GM12878 (cell line): ENCODE measurements at regions of chr15 and their contacts with region 1.

Region 1: GRCh38 chr15:44738340-44738984 is 2.1 kb downstream of the TRIM69 start:
- DNase-seq: no peak
- ATAC-seq: no peak
- H3K4me3 ChIP-seq: no peak overlapping the region
- H3K27ac ChIP-seq: no peak overlapping the region
- H3K4me1 ChIP-seq: peaks cover 22% of the 10 kb centered on the region
- H3K27me3 ChIP-seq: no peaks in the 10 kb centered on the region
- CTCF ChIP-seq: peak; percentile 55 to 80 (median 70); a peak in 5 of 6 replicates
- EP300 ChIP-seq: no peak
- POLR2A ChIP-seq: no peak
- RAD21 ChIP-seq: peak; percentile 87

Region 2: DNA sequence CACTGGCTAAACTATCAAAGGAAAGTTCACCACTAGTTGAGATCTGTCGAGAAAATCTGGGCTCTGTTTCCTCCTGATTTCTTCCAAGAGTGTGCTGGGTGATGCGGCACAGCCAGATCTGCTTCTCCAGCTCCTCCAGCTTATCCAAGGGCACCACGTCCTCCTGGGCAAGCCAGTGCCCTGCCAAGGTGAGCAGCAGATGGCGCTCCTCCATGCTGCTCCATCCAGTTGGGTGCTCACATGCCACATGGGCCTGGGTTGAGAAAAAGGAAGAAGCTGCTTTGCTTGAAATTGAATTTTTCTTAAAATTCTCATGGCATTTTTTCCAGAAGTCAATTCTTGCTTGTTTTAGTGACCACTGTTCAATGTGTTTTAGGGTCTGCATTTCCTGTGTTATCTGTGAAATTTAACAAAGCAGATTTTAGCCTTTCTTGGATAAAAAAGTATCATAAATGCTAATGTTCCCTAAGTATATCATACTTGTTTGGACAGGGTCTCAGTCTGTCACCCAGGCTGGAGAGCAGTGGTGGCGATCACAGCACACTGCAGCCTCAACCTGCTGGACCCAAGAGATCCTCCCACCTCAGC is 154.2 kb before region 1 on chr15:
- CTCF ChIA-PET with region 1: interaction called, 175 read pairs
- POLR2A ChIA-PET with region 1: interaction called, 18 read pairs
- RAD21 ChIA-PET with region 1: interaction called, 109 read pairs
- SMC1A ChIA-PET with region 1: interaction called, 148 read pairs
- in situ Hi-C with region 1: no loop called
- intact Hi-C with region 1: no loop called
- DNase-seq: no peak
- ATAC-seq: peak; percentile 99; the same call in 2 of the 3 replicates
- H3K4me3 ChIP-seq: no peak overlapping the region
- H3K27ac ChIP-seq: no peak overlapping the region
- H3K4me1 ChIP-seq: no peaks in the 10 kb centered on the region
- H3K27me3 ChIP-seq: no peaks in the 10 kb centered on the region
- CTCF ChIP-seq: peak; percentile 63 to 77 (median 75)
- EP300 ChIP-seq: no peak
- POLR2A ChIP-seq: no peak
- RAD21 ChIP-seq: peak; percentile 49

Region 3: GRCh38 chr15:44606740-44607139 is 131.7 kb before region 1 on chr15:
- CTCF ChIA-PET with region 1: interaction called, 22 read pairs
- POLR2A ChIA-PET with region 1: no interaction called
- RAD21 ChIA-PET with region 1: interaction called, 7 read pairs
- SMC1A ChIA-PET with region 1: interaction called, 16 read pairs
- in situ Hi-C with region 1: no loop called
- intact Hi-C with region 1: no loop called
- DNase-seq: no peak
- ATAC-seq: no peak
- H3K4me3 ChIP-seq: no peak overlapping the region
- H3K27ac ChIP-seq: no peak overlapping the region
- H3K4me1 ChIP-seq: no peaks in the 10 kb centered on the region
- H3K27me3 ChIP-seq: no peaks in the 10 kb centered on the region
- CTCF ChIP-seq: no peak
- EP300 ChIP-seq: no peak
- POLR2A ChIP-seq: no peak
- RAD21 ChIP-seq: no peak

Region 4: DNA sequence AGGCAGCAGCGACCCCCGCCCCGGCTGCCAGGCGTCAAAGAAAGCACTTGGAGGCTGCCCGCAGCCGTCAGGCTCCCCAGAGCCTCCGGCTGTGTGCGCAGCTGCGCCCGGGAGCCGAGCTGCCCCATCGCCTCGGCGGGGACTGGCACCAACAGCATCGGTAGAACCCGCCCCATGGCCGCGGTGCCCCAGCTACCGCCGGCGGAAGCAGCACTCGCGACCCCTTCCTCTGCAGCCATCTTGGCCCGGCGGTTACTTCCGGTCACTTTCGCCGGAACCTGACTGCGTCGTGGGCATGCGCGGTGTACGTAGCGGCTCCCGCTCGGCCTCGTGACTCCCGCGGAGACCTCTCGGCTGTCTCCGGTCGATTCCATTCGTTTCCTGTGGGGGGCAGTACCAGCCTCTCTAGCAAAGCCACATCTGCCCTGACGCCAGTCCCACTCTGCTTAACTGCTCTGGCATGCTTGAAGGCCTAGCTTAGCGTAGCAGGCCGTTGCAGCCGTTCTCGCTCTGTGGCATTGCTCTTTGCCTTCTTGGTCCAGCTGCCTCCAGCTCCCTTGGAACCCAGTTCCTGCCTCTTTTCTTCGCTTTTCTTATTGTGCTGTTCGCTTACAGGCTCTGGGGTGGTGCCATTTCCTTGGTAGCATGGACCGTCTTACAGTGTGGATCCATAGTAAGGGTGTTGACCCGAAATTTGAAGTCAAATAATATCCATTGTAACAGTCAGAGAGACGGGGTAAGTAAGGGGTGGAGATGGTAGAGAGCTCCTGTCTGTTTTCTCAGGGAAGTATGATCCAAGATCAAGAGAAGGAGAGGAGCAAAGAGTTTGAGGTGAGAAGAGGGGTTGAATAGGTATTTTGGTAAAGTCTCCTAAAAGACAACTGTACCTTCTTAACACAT is 74.8 kb before region 1 on chr15 and contains the start of gene SPG11:
- CTCF ChIA-PET with region 1: interaction called, 454 read pairs
- POLR2A ChIA-PET with region 1: interaction called, 194 read pairs
- RAD21 ChIA-PET with region 1: interaction called, 680 read pairs
- SMC1A ChIA-PET with region 1: interaction called, 383 read pairs
- in situ Hi-C with region 1: no loop called
- intact Hi-C with region 1: loop called (anchors 2 kb)
- DNase-seq: peak; percentile 99
- ATAC-seq: peak; percentile 84
- H3K4me3 ChIP-seq: peak within 1 kb of the TSS; percentile 89
- H3K27ac ChIP-seq: peak within 1 kb of the TSS; percentile 98
- H3K4me1 ChIP-seq: peaks cover 32% of the 10 kb centered on the region
- H3K27me3 ChIP-seq: no peaks in the 10 kb centered on the region
- CTCF ChIP-seq: peak; percentile 89 to 99 (median 97); a peak in 5 of 6 replicates
- EP300 ChIP-seq: no peak
- POLR2A ChIP-seq: peak; percentile 96
- RAD21 ChIP-seq: peak; percentile 81
- polyA plus RNA-seq, gene SPG11: 22.1 to 23.6 TPM

Region 5: DNA sequence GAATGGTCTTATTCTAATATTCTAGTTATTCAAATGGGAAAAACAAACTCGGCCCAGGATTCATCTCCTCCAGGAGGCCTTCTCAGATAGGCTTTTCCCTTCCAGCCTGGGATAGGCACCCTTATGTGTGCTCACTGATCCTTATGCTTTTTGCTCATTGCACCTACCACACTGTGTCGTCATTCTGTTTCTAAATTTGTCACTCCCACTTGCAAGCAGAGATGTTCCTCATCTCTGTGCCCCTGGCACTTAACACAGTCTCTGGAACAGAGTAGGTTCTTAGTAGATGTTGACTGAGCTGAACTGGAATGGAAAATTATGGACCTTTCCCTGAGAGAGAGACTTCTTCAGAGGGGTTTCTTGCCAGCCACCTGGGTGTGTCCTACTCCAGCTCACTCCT is 56.3 kb before region 1 on chr15:
- CTCF ChIA-PET with region 1: interaction called, 14 read pairs
- POLR2A ChIA-PET with region 1: interaction called, 7 read pairs
- RAD21 ChIA-PET with region 1: interaction called, 24 read pairs
- SMC1A ChIA-PET with region 1: interaction called, 32 read pairs
- in situ Hi-C with region 1: no loop called
- intact Hi-C with region 1: no loop called
- DNase-seq: no peak
- ATAC-seq: peak; percentile 71
- H3K4me3 ChIP-seq: no peak overlapping the region
- H3K27ac ChIP-seq: no peak overlapping the region
- H3K4me1 ChIP-seq: peaks cover 28% of the 10 kb centered on the region
- H3K27me3 ChIP-seq: no peaks in the 10 kb centered on the region
- CTCF ChIP-seq: no peak
- EP300 ChIP-seq: no peak
- POLR2A ChIP-seq: no peak
- RAD21 ChIP-seq: no peak

Region 6: DNA sequence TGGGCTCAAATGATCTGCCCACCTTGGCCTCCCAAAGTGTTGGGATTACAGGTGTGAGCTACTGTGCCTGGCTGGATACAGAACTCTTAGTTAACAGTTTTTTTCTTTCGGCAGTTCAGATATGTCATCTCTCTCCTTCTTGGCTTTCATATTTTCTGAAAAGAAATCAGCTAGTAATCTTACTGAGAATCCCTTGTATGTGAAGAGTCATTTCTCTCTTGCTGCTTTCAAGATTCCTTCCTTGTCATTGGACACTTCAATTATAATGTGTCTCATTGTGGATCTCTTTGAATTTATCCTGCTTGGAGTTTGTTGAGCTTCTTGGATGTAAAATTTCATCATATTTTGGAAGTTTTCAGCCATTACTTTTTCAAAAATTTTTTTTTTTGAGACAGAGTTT is 14.9 kb after region 1 on chr15:
- CTCF ChIA-PET with region 1: interaction called, 10 read pairs
- POLR2A ChIA-PET with region 1: interaction called, 5 read pairs
- RAD21 ChIA-PET with region 1: interaction called, 3 read pairs
- SMC1A ChIA-PET with region 1: interaction called, 13 read pairs
- in situ Hi-C with region 1: no loop called
- intact Hi-C with region 1: no loop called
- DNase-seq: no peak
- ATAC-seq: no peak
- H3K4me3 ChIP-seq: no peak overlapping the region
- H3K27ac ChIP-seq: no peak overlapping the region
- H3K4me1 ChIP-seq: no peaks in the 10 kb centered on the region
- H3K27me3 ChIP-seq: no peaks in the 10 kb centered on the region
- CTCF ChIP-seq: no peak
- EP300 ChIP-seq: no peak
- POLR2A ChIP-seq: no peak
- RAD21 ChIP-seq: no peak